ENCODE measurements at regions of chr20 and their contacts with region 1.

Region 1: GRCh38 chr20:52083627-52084232 is 107.8 kb downstream of the ZFP64 start:
- DNase-seq: peak; percentile 15
- H3K4me3 Mint-ChIP-seq: peak overlapping the region; percentile 12
- H3K27ac Mint-ChIP-seq: no peak overlapping the region
- H3K4me1 Mint-ChIP-seq: peaks cover 26% of the 10 kb centered on the region
- H3K27me3 Mint-ChIP-seq: no peaks in the 10 kb centered on the region

Region 2: DNA sequence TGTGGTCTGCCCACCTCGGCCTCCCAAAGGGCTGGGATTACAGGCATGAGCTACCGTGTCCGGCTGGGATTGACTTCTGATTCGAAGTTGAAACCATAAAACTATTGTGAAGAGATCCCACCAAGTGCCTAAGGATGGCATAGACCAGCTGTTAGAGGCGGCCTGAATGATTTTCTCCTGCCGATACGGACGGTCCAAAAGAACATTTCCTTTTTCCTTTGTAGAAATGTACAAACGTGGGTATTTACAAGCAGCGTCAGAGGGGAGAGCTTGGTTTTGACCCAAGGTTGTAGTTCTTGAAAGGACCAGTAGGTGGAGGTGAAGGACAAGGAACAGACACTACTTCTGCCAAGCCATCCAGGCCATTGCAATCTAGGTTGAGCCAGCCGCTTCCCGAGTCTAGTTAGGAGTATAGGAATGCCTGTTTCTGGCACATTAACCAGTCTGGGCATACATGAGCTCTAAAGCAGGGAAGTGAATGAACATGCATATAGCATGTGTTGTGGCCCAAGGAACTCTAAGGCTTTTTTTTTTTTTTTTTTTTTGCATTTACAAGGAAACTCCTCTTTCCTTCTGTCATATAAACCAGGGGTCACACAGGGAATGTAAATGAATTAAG is 1096.0 kb before region 1 on chr20:
- intact Hi-C with region 1: loop called (anchors 2 kb)
- DNase-seq: peak; percentile 56
- H3K4me3 Mint-ChIP-seq: no peak overlapping the region
- H3K27ac Mint-ChIP-seq: no peak overlapping the region
- H3K4me1 Mint-ChIP-seq: peaks cover 5% of the 10 kb centered on the region
- H3K27me3 Mint-ChIP-seq: peaks cover 17% of the 10 kb centered on the region

Region 3: GRCh38 chr20:51372176-51372803 is 711.4 kb before region 1 on chr20:
- intact Hi-C with region 1: loop called (anchors 1 kb)
- DNase-seq: peak; percentile 22
- H3K4me3 Mint-ChIP-seq: no peak overlapping the region
- H3K27ac Mint-ChIP-seq: no peak overlapping the region
- H3K4me1 Mint-ChIP-seq: peaks cover 17% of the 10 kb centered on the region
- H3K27me3 Mint-ChIP-seq: peaks cover 5% of the 10 kb centered on the region

Region 4: DNA sequence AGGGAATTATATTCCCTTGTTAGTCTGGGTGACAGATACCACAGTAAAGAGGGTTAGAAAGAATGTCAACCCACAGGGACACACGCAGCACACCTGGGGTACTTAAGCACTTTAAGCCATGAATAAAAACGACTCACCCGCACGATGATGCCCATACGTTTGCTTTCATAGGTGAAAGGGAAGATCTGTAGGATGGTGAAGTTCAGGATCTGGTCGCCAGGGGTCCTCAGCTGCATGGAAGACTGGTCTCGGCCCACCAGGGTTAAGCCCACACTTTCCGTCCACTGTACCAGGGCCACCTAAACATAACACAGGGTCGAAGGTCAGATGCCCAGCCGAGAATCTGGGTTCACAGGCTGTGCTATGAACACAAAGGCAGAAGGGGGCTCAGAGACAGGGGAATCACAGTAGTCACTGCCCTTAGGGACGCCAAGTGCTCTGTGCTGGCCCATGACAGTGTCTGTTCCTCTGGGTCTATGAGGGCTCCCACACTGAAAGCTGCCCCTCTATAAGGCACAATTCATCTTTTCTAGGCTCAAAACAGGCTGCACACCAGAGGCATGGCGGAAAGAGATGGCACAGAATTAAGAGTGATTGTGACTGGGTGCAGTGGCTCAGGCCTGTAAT is 444.4 kb before region 1 on chr20:
- intact Hi-C with region 1: loop called (anchors 1 kb)
- DNase-seq: no peak
- H3K4me3 Mint-ChIP-seq: no peak overlapping the region
- H3K27ac Mint-ChIP-seq: no peak overlapping the region
- H3K4me1 Mint-ChIP-seq: no peaks in the 10 kb centered on the region
- H3K27me3 Mint-ChIP-seq: peaks cover 4% of the 10 kb centered on the region

Region 5: DNA sequence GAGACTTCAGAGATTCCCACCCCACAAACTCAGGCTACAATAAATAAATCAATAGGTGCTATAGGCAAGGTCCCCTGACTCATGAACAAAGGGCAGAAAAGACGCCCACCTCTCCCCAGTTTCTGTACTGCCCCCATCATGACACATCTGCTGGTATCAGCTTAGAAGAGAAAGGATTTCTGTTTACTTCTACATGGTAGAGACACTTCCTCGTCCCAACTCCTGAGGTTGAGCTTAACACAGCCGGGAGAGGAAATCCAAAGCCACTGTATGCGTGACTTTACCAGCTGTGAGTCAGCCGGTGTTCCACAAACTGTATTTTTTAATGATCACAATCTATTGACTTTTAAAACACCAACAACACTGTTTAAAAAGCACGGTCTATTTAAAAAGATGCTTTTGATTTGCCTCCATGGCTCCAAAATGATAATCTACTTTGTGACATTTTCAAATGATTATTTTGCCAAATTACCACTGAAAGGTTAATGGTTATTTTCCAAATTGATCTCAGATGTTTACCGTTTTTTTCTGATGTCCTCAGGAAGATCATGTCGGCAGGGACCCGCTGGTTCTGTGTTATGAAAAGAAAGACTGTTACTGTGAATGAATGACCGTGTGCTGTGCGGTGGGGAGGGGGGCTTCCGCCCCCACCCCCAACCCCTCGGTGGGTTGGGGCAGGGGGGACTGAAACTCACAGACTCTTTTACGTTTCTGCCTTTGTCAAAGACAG is 388.0 kb before region 1 on chr20:
- intact Hi-C with region 1: loop called (anchors 1 kb)
- DNase-seq: no peak
- H3K4me3 Mint-ChIP-seq: peak overlapping the region; percentile 37
- H3K27ac Mint-ChIP-seq: peak overlapping the region; percentile 52
- H3K4me1 Mint-ChIP-seq: peaks cover 23% of the 10 kb centered on the region
- H3K27me3 Mint-ChIP-seq: peaks cover 13% of the 10 kb centered on the region

Region 6: DNA sequence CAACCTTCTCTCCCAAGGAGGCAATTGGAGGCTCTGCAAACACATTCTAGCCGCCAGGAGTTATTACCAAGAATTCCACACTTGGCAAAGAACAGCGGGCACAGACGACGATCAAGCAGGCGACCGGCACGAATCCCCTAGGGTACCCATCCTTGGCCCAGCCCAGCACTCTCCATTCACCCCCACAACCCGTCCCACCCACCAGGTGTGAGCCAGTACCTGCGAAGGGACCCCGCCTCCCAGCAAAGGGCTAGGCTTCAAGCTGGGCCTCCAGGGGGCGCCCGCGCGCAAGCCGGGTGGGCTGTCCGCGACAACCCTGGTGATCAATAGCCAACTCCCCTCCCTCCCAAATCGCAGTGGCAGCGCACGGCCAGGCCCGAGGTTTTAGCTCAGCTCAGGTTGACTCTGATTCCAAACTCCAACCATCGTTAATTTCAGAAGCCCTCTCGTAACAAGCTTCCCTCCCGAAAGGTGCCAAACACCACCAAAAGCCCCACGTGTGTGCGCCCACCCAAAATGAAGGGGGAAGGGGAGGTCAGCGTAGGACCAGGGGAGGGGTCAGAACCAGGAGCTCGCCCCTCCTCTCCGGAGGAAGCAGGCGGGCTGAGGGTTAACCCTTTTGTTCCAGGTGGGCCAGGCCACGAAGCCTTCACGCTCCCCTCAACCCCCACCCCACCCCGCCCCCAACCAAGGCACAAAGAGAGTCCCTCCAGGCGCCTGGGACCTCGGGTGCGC is 283.5 kb before region 1 on chr20:
- intact Hi-C with region 1: loop called (anchors 1 kb)
- DNase-seq: peak; percentile 38
- H3K4me3 Mint-ChIP-seq: peak overlapping the region; percentile 74
- H3K27ac Mint-ChIP-seq: peak overlapping the region; percentile 44
- H3K4me1 Mint-ChIP-seq: peaks cover 3% of the 10 kb centered on the region
- H3K27me3 Mint-ChIP-seq: peaks cover 72% of the 10 kb centered on the region

Region 7: GRCh38 chr20:51899668-51900067 is 184.1 kb before region 1 on chr20:
- intact Hi-C with region 1: no loop called
- DNase-seq: no peak
- H3K4me3 Mint-ChIP-seq: no peak overlapping the region
- H3K27ac Mint-ChIP-seq: no peak overlapping the region
- H3K4me1 Mint-ChIP-seq: no peaks in the 10 kb centered on the region
- H3K27me3 Mint-ChIP-seq: peaks cover 4% of the 10 kb centered on the region

Region 8: GRCh38 chr20:51966291-51966971 is 117.3 kb before region 1 on chr20:
- intact Hi-C with region 1: loop called (anchors 10 kb)
- DNase-seq: no peak
- H3K4me3 Mint-ChIP-seq: no peak overlapping the region
- H3K27ac Mint-ChIP-seq: no peak overlapping the region
- H3K4me1 Mint-ChIP-seq: no peaks in the 10 kb centered on the region
- H3K27me3 Mint-ChIP-seq: peaks cover 7% of the 10 kb centered on the region

Region 9: DNA sequence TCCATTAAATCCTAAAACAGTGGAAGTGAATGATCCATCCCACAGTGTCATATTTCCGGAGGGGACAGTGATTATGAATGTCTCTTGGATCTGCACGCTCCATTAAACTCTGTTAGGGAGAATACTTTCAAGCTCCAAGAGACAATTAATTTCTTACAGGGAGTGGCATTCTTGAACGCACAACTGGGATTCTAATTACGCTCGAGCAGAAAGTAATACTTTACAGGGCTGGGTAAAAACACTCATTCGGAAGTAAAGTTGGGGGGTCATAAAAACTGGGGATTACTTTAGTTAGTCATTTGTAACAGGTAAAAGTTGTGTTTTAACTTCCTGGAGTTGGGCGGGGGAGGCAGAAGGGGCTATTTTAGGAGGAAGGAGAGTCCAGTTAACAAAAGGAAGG is 43.9 kb before region 1 on chr20:
- intact Hi-C with region 1: no loop called
- DNase-seq: no peak
- H3K4me3 Mint-ChIP-seq: no peak overlapping the region
- H3K27ac Mint-ChIP-seq: no peak overlapping the region
- H3K4me1 Mint-ChIP-seq: no peaks in the 10 kb centered on the region
- H3K27me3 Mint-ChIP-seq: no peaks in the 10 kb centered on the region

Measured in activated T-helper 1 cell treated with anti-CD3 and anti-CD28 coated beads, Interleukin-12 subunit alpha, Interleukin-12 subunit beta, Interleukin-2, Interleukin-4 antibody, amounts not matched to agents 30 ng/mL and 10 ng/mL and 1 ng/mL, durations not matched to agents 14 hours and 24 hours and 36 hours (primary cell).